Left colon (tissue), 2 donors: ENCODE measurements at regions of chr4 and their contacts with region 1.

Region 1: DNA sequence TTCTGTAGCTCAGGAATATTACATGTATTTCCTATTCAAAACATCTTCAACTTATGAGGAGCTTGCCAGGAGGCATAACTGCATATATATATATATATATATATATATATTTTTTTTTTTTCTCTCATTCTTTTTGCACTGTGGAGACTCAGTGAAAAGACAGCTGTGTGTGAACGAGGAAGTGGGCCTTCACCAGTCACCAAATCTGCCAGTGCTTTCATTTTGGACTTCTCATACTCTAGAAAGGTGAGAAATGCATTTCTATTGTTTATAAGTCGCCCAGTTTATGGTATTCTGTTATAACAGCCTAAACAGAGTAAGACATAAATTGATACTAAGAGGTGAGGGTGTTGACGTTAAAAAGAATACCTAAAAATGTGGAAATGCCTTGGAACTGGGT is 710.6 kb downstream of the TRAM1L1 start:
- DNase-seq: no peak
- ATAC-seq: no peak

Region 2: GRCh38 chr4:116668190-116668589 is 293.4 kb after region 1 on chr4:
- intact Hi-C with region 1: loop called in 1 of 2 experiments (anchors 10 kb)
- DNase-seq: no peak
- ATAC-seq: no peak

Region 3: DNA sequence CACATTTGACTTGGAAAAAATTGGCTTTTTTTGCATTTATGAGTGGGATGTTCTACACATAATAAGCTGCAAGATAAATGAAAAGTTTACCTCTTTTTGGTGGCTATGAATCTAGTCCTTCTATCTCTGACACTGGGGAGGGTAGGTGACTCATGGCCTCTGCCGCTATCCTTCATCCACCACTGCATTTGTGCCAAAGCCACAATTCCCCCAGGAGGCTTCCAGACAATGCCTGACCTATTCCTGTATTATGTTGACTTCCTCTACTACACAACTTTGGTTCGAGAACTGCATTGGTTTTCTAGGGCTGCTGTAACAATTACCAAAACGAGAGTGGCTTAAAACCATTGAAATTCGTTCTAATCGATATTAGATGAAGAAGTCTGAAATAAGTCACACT is 465.0 kb after region 1 on chr4:
- intact Hi-C with region 1: no loop called
- DNase-seq: no peak
- ATAC-seq: no peak